Esophagus squamous epithelium (tissue), 5 donors: ENCODE measurements at regions of chr10 and their contacts with region 1.

Region 1: DNA sequence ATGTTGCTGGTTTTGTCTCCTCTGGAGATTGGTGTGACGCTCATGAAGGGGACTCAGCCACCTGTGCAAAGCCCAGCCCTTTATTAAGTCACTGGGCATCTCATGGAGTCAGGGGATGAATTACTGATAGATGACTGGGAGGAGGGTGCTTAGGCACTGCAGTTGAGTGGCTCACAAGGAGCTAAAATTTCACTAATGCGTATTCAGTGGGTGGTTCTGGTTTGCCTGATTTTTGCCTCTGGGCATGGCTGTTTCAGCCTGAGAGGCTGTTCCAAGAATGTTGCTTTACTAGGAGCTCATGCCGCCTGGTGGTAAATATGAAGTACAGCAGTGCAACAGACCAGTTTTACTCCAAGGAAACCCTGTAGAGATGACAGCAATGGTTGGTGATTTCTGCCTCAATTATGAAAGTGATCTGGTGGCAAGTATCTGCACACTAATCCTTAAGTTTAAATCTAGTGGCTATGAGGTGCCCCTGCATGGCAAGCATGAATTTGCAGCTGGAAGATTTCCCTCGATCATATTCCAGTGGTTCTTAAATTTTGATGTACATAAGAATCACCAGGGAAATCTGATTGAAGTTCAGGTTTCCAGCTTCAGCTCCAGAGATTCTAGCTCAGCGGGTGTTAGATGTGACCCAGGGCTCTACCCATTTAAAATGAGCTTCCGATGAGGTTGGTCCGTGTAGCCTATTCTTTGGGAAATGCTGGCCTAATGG is 19.9 kb downstream of the ACTA2 start:
- DNase-seq: no peak
- H3K4me3 ChIP-seq: no peak overlapping the region
- H3K27ac ChIP-seq: peak overlapping the region; percentile 41 to 74 (median 61)
- H3K4me1 ChIP-seq: peaks cover 6 to 33% (median 10%) of the 10 kb centered on the region in 3 donors
- H3K27me3 ChIP-seq: no peaks in the 10 kb centered on the region
- CTCF ChIP-seq: peak; percentile 91 to 97 (median 95)
- POLR2A ChIP-seq: no peak

Region 2: DNA sequence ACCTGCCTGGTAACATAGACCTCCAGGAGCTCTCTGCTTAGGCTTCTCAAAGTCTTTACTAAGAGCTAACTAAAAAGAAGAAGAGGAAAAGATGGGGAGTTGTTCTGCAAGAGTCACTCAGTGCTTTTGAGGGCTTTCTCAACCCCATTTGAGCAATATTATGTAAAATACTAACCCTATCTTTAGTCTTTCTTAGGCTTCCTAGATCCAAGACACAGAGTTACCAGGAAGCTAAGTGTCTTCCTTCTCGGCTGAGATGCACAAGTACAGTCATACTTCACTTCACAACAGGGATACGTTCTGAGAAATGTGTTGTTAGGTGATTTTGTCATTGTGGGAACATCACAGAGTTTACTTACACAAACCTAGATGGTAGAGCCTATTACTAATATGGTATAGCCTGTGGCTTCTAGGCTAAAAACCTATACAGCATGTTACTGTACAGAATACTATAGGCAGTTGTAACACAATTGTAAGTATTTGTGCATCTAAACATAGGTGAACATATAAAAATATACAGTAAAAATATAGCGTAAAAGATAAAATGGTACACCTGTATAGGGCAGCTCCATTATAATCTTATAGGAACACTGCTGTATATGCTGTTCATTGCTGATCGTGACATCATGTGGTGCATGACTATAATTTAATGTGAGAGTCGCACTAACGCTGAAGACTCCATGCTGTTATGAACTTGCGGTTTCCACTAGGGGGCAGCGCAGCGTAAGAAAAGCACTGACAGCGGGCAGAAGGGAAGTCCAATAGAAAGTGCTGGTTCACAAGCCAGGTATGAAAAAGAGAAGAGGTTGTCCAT is 97.4 kb before region 1 on chr10:
- intact Hi-C with region 1: loop called (anchors 5 kb)
- DNase-seq: peak; percentile 17
- H3K4me3 ChIP-seq: no peak overlapping the region
- H3K27ac ChIP-seq: no peak overlapping the region
- H3K4me1 ChIP-seq: peaks cover 0 to 55% (median 0%) of the 10 kb centered on the region in 3 donors
- H3K27me3 ChIP-seq: no peaks in the 10 kb centered on the region
- CTCF ChIP-seq: peak; percentile 73 to 95 (median 92)
- POLR2A ChIP-seq: no peak

Region 3: GRCh38 chr10:88986549-88987242 is 54.0 kb after region 1 on chr10:
- intact Hi-C with region 1: loop called (anchors 5 kb)
- DNase-seq: no peak
- H3K4me3 ChIP-seq: no peak overlapping the region
- H3K27ac ChIP-seq: peak overlapping the region in 3 of 4 donors; percentile 39 to 60 (median 53)
- H3K4me1 ChIP-seq: peaks cover 4 to 57% (median 12%) of the 10 kb centered on the region in 3 donors
- H3K27me3 ChIP-seq: no peaks in the 10 kb centered on the region
- CTCF ChIP-seq: peak in 5 of 6 experiments; percentile 58 to 82 (median 72)
- POLR2A ChIP-seq: no peak

Region 4: GRCh38 chr10:89217057-89217990 is 284.6 kb after region 1 on chr10:
- intact Hi-C with region 1: loop called (anchors 5 kb)
- DNase-seq: no peak
- H3K4me3 ChIP-seq: no peak overlapping the region
- H3K27ac ChIP-seq: peak overlapping the region; percentile 17 to 69 (median 30)
- H3K4me1 ChIP-seq: peaks cover 5 to 51% (median 11%) of the 10 kb centered on the region in 3 donors
- H3K27me3 ChIP-seq: no peaks in the 10 kb centered on the region
- CTCF ChIP-seq: peak; percentile 62 to 84 (median 80)
- POLR2A ChIP-seq: no peak